Heart right ventricle (tissue), 16 donors: ENCODE measurements at regions of chr12 and their contacts with region 1.

Region 1: DNA sequence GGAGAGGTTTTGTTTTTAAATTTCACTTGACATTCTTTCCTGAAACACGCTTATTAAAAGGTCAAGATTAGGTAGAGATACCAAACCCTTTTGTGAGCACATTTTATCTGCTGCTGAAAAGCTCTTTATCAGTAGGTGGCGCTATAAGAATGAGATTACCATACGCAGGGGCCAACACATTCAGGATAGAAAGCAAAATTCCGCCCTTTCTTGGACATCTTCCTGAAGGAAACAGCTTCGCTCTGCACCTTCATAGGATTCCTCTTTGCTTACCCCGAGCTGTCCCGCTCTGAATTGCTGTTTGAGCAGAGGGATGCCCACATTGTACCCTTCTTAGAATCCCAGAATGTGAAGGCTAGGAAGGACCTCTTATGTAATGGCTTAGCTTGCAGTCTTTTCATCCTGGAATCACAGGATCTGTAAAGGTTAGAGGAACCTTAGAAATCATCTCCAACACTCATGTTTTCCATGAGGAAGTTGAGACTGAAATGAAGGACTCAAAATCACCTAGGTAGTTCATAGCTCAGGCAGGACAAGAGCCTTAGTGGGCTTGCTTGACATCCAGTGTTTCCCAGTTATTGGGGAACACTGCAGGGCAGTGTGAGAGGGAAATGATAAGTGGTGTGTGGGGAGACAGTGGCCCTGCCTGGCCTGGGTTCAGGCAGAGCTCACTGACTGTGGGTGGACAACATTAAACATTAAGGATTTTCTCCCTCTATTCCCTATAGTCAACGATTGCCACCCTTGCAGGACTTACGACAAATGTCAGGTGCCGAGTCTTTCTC is 38.7 kb upstream of the CRY1 start:
- DNase-seq: peak in 1 of 2 donors; percentile 14
- ATAC-seq: peak in 7 of 8 donors; percentile 35 to 61 (median 51)
- H3K4me3 ChIP-seq: no peak overlapping the region
- H3K27ac ChIP-seq: no peak overlapping the region
- H3K4me1 ChIP-seq: peaks cover 0 to 2% (median 0%) of the 10 kb centered on the region in 9 donors
- H3K27me3 ChIP-seq: peaks cover 0 to 16% (median 0%) of the 10 kb centered on the region in 7 donors
- CTCF ChIP-seq: peak; percentile 48 to 83 (median 79)

Region 2: DNA sequence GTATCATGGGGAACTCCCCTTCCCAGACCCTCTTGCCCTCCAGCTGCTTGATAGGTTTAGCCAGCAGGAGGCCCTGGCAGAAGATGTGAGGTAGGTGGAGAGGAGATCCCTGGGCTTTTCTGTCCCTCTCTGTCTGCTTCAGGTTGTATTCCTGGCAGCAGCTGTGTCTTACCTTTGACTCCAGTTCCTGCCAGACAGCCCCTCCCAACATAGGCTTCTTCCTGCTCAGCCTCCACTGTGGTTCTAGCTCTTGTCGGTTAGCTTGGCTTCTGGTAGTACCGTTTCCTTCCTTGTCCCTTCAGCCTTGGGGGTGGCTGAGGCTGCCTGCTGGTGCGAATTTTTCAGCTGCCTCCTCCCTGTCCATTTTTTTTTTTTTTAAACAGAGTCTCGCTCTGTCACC is 177.0 kb after region 1 on chr12:
- intact Hi-C with region 1: no loop called
- DNase-seq: no peak
- ATAC-seq: no peak
- H3K4me3 ChIP-seq: no peak overlapping the region
- H3K27ac ChIP-seq: no peak overlapping the region
- H3K4me1 ChIP-seq: no peaks in the 10 kb centered on the region
- H3K27me3 ChIP-seq: peaks cover 6 to 42% (median 39%) of the 10 kb centered on the region in 7 donors
- CTCF ChIP-seq: no peak

Region 3: DNA sequence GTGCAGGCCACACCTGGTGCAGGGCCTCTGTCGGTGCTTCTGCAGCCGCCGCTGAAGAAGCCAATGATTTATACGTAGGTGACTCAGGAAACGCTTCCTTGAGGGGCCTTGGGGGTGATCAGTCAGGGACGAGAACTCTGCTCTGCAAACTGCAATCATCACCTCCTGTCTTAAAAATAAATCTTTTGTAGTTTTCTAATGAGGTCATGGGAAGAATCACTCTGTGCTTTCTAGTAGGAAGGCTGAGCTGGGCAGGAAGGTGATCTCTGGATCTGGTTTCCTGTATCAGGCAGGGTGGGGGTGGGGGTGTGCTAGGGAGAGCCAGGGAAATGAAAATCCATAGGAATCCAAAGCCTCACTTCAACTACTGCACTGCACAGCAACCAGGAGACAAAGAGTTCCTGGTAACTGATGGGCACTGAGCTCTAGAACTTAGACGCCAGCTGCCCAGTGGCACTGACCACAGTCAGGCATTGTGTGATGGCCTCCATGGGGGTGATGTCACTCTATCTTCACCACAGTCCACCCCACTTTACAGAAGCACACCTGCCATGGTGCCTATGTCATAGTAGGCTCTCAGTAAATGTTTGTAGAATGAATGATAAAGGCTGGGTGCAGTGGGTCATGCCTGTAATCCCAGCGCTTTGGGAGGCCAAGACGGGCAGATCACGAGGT is 261.2 kb after region 1 on chr12:
- intact Hi-C with region 1: loop called in 2 of 10 experiments (anchors 10 kb)
- DNase-seq: no peak
- ATAC-seq: no peak
- H3K4me3 ChIP-seq: no peak overlapping the region
- H3K27ac ChIP-seq: no peak overlapping the region
- H3K4me1 ChIP-seq: peaks cover 0 to 5% (median 0%) of the 10 kb centered on the region in 9 donors
- H3K27me3 ChIP-seq: peaks cover 0 to 3% (median 0%) of the 10 kb centered on the region in 7 donors
- CTCF ChIP-seq: no peak

Region 4: GRCh38 chr12:107402041-107403022 is 270.3 kb after region 1 on chr12:
- intact Hi-C with region 1: loop called in 5 of 10 experiments (anchors 5 to 10 kb)
- DNase-seq: peak in 1 of 2 donors; percentile 17
- ATAC-seq: no peak
- H3K4me3 ChIP-seq: no peak overlapping the region
- H3K27ac ChIP-seq: no peak overlapping the region
- H3K4me1 ChIP-seq: peaks cover 0 to 11% (median 0%) of the 10 kb centered on the region in 9 donors
- H3K27me3 ChIP-seq: peaks cover 0 to 4% (median 0%) of the 10 kb centered on the region in 7 donors
- CTCF ChIP-seq: peak in 7 of 9 donors; percentile 31 to 65 (median 46)

Region 5: DNA sequence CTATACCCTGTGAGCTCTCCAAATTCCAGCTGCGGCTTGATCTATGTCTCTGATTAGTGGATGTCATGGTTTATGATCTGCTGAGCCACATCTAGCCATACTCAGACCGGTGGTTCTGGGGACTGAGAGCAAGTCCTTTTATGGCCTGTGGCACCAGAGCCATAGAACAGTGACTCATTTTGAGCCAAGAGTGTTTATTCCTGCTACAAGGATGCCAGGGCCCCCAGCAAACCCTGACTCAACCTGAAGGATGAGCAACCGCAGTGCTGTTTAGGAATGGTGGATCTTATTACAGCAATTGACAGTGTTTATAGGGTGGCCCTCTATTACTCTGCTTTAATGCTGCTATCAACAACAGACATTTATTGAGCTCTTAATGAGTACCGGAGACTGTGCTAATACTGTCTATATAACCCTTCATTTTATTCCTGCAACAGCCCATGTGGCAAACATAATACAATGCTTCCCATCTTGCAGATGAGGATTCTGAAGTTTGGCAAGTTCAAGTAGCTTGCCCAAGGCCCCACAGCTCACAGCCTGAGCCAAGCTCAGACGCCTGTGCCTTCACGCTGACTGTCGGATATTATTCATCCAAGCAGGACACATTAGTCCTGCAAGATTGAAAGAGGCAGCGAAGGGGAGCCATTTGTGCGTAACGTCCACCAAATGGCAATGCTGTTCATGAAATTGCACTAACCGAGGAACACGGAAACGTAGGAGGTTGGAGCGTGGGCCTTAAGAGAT is 279.9 kb after region 1 on chr12:
- intact Hi-C with region 1: loop called in 3 of 10 experiments (anchors 5 to 10 kb)
- DNase-seq: no peak
- ATAC-seq: no peak
- H3K4me3 ChIP-seq: no peak overlapping the region
- H3K27ac ChIP-seq: no peak overlapping the region
- H3K4me1 ChIP-seq: no peaks in the 10 kb centered on the region
- H3K27me3 ChIP-seq: no peaks in the 10 kb centered on the region
- CTCF ChIP-seq: no peak

Region 6: DNA sequence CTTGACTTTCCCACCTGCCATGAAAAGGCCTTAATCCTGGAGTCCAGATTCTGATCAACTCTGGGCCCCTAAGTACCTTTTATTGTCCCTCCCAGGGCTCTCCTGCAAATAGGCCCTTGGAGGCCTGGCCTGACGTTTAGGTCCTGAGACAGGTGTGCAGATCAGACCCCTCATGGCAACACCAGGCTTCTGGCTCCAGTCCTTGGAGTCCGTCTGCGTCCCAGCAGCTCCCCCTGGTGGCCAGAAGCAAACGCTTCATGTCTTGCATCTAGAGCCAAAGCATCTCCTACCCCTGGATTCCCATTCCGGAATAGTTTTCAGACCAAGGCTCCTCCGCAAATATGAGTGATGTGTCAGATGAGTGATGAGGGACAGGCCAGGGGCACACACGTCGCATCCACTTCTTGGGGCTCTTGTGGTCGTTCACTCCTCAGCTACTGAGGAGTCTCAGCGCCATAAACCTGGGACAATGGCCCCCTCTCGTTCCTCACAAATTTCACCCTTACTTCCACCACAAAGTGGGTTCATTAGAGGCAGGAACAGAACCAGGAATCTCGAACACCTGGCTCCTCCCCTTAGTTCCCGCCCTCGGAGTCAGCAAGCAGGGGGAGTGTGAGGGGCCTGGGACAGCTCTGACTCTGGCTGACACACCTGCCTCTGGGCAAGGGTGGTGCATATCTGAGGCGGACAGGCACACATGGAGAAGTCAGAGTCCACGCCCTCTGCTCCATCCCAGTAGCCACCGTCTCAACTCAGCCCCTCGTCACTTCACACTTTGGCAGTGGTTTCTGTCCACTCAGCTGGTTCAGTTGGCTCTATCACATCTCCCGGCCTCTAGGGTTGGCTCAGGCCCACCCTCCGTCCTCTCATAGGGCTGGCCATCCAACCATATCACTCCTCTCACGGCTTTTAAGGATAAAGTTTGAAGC is 475.7 kb after region 1 on chr12:
- intact Hi-C with region 1: loop called (anchors 1 to 5 kb)
- DNase-seq: peak; percentile 78 to 80
- ATAC-seq: peak; percentile 46 to 84 (median 82)
- H3K4me3 ChIP-seq: no peak overlapping the region
- H3K27ac ChIP-seq: no peak overlapping the region
- H3K4me1 ChIP-seq: peaks cover 0 to 9% (median 0%) of the 10 kb centered on the region in 9 donors
- H3K27me3 ChIP-seq: peaks cover 0 to 7% (median 0%) of the 10 kb centered on the region in 7 donors
- CTCF ChIP-seq: peak; percentile 87 to 95 (median 93)